HEK293 (cell line): ENCODE measurements at regions of chr17 and their contacts with region 1.

Region 1: GRCh38 chr17:50094753-50095619 is at the start of gene PDK2:
- H3K4me3 ChIP-seq: peak within 1 kb of the TSS; percentile 85
- H3K27ac ChIP-seq: peak within 1 kb of the TSS; percentile 45
- H3K4me1 ChIP-seq: peaks cover 2% of the 10 kb centered on the region; the same call in 1 of the 2 replicates
- CTCF ChIP-seq: no peak; the same call in none of the 2 replicates

Region 2: DNA sequence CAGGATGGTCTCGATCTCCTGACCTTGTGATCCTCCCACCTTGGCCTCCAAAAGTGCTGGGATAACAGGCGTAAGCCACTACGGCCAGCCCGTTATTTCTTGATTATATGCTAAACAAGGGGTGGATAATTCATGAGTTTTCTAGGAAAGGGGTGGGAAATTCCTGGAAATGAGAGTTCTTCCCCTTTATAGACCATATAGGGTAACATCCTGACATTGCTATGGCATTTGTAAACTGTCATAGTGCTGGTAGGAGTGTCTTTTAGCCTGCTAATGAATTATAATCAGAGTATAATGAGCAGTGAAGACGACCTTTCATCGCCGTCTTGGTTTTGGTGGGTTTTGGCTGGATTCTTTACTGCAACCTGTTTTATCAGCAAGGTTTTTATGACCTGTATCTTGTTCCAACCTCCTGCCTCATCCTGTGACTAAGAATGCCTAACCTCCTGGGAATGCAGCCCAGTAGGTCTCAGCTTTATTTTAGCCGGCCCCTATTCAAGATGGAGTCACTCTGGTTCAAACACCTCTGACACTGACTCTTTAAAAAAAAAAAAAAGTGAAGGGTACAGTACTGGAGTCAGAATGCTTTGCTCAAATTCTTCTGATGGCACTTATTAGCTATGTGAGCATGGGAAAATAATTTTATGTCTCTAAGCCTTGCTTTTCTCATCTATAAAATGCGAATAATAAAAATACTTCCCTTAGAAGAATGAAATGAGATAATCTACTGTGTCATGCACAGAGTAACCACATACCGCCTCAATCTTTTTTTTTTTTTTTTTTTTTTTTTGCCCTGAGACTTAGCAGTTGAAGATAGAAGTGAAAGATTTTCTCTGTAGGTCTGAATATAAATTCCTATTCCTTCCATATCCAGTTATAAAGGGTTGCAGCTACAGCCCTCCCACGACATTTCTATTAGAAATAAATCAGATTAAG is 1269.3 kb before region 1 on chr17:
- CTCF ChIA-PET with region 1: no interaction called
- POLR2A ChIA-PET with region 1: no interaction called
- H3K4me3 ChIP-seq: no peak overlapping the region
- H3K27ac ChIP-seq: no peak overlapping the region
- H3K4me1 ChIP-seq: no peaks in the 10 kb centered on the region
- CTCF ChIP-seq: no peak

Region 3: DNA sequence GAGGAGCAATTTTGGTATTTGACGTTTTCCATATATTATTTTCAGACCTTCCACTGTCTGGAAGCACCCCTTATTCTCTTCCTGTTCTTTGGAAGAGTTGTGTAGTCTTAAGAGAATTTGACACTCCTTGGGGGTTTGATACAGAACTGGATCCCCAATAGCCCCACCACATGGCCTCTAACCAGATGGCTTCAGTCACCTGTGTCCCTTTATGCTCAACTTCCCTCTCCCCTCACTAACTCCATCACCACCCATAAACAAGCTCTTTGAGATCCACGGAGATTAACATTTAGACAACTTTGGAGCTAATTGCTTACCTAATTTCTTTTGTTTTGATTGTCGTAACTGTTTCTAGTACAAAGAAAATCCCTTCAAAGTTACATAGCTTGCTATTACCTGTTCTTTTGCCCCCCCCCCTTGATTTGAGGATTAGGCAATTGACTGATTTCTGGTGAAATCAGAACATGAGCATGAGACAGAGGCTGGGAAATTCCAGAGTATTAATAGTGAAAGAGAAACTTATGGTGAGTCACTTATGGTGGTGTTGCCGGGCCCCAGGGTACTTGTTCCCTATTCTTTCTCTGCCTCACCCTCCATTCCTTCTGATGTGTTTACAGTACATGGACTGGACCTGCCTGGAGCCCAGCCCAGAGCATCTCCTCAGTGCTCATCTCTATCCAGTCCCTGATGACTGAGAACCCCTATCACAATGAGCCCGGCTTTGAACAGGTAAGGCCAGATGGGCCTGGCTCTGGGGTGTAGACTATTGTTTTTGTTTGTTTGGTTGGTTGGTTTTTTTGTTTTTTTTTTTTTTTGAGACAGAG is 1179.3 kb before region 1 on chr17:
- CTCF ChIA-PET with region 1: no interaction called
- POLR2A ChIA-PET with region 1: no interaction called
- H3K4me3 ChIP-seq: no peak overlapping the region
- H3K27ac ChIP-seq: no peak overlapping the region
- H3K4me1 ChIP-seq: peaks cover 3% of the 10 kb centered on the region
- CTCF ChIP-seq: no peak

Region 4: GRCh38 chr17:50055426-50056230 is 39.4 kb before region 1 on chr17 and contains the start of gene ITGA3:
- CTCF ChIA-PET with region 1: interaction called, 28 read pairs
- POLR2A ChIA-PET with region 1: interaction called, 10 read pairs
- H3K4me3 ChIP-seq: peak within 1 kb of the TSS; percentile 64
- H3K27ac ChIP-seq: peak within 1 kb of the TSS; percentile 75
- H3K4me1 ChIP-seq: peaks cover 16% of the 10 kb centered on the region
- CTCF ChIP-seq: no peak

Region 5: DNA sequence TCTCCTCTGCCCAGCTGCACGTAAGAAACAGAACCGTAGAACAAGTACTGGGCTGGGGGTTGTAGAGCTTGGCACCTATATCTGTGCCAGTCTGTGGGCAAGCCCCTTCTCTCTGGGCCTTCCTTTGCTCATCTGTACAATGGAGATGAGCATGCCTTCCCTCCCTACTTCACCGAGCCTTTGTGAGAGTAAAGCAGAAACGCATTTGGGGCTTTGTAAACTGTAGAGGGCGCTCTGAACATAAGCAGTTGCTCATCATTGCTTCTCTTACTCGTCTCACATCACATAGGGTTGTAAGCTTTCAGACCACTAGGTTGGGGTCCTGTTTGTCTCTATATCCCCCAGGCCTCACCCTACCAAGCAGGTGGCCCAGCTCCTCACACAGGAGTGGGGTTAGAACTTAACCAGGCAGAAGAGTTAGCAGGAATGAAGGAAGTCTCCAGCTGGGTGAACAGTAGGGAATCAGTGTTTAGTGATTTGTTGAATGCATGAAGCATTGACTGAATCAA is 19.9 kb after region 1 on chr17:
- CTCF ChIA-PET with region 1: interaction called, 42 read pairs
- POLR2A ChIA-PET with region 1: interaction called, 4 read pairs
- H3K4me3 ChIP-seq: no peak overlapping the region
- H3K27ac ChIP-seq: no peak overlapping the region
- H3K4me1 ChIP-seq: no peaks in the 10 kb centered on the region; the same call in 1 of the 2 replicates
- CTCF ChIP-seq: peak; percentile 58

Region 6: GRCh38 chr17:50161023-50161910 is 66.3 kb after region 1 on chr17:
- CTCF ChIA-PET with region 1: interaction called, 45 read pairs
- POLR2A ChIA-PET with region 1: no interaction called
- H3K4me3 ChIP-seq: peak overlapping the region; percentile 54
- H3K27ac ChIP-seq: peak overlapping the region; percentile 17; the same call in 1 of the 2 replicates
- H3K4me1 ChIP-seq: no peaks in the 10 kb centered on the region
- CTCF ChIP-seq: peak; percentile 100

Region 7: DNA sequence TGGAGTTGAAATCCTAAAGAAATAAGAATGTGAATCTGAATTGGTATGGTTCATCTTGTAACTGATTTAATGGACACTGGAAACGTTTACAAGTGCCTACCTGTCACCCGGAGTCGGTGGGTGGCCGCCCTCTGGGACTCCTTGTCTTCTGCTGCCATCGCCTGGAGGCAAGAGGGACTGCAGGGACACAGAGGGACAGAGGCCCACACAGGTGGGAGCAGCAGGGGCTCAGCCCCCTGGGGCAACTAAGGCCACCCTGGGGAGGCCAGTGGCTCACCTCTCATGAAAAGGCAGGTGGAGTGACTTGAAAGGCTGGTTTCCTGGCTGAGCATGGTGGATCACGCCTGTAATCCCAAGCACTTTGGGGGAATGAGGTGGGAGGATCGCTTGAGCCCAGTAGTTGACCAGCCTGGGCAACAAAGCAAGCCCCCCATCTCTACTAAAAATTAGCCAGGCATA is 202.4 kb after region 1 on chr17:
- CTCF ChIA-PET with region 1: interaction called, 61 read pairs
- POLR2A ChIA-PET with region 1: interaction called, 3 read pairs
- H3K4me3 ChIP-seq: no peak overlapping the region
- H3K27ac ChIP-seq: no peak overlapping the region
- H3K4me1 ChIP-seq: no peaks in the 10 kb centered on the region
- CTCF ChIP-seq: peak; percentile 92